HepG2 (cell line): ENCODE measurements at regions of chr7 and their contacts with region 1.

Region 1: GRCh38 chr7:47497367-47498096 is 84.4 kb downstream of the TNS3 start:
- DNase-seq: no peak
- ATAC-seq: no peak
- H3K4me3 ChIP-seq: no peak overlapping the region
- H3K27ac ChIP-seq: no peak overlapping the region
- H3K4me1 ChIP-seq: peaks cover 82% of the 10 kb centered on the region
- H3K27me3 ChIP-seq: no peaks in the 10 kb centered on the region
- CTCF ChIP-seq: no peak
- EP300 ChIP-seq: no peak
- POLR2A ChIP-seq: no peak
- RAD21 ChIP-seq: no peak

Region 2: DNA sequence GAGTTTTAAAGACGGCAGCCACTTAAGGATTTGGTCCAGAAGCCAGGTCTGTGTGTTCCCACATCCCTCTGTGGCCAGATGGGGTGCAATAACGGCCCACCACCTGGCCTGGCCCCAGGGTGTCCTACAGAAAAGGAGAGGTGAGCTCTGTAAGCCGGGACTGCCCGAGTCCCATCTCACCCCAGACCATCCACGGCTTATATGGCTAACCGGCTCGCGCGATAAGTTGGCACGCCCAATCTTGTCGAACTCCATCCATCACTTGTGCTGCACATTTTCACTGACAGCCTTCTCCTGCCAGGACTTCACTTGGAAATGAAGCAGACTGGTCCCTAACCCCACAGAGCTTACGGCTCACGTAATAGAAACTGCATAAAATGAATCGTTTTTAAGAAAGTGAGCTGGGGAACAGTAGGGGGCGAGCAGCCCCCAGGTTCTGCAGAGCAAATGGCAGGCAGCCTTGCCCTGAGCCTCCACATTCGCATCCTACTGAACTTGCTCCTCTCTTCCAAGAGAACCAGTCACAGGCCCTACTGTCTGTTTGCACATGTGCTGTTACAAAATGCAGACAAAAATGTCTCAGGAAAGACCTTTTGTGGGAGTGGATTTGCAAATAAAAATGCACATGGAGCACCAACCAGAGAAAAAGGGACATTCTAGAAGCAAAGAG is 13.8 kb before region 1 on chr7:
- CTCF ChIA-PET with region 1: no interaction called
- POLR2A ChIA-PET with region 1: no interaction called
- in situ Hi-C with region 1: no loop called
- intact Hi-C with region 1: no loop called
- DNase-seq: peak; percentile 36
- ATAC-seq: peak; percentile 46
- H3K4me3 ChIP-seq: no peak overlapping the region
- H3K27ac ChIP-seq: peak overlapping the region; percentile 26
- H3K4me1 ChIP-seq: peaks cover 82% of the 10 kb centered on the region
- H3K27me3 ChIP-seq: no peaks in the 10 kb centered on the region
- CTCF ChIP-seq: peak; percentile 51
- EP300 ChIP-seq: no peak
- POLR2A ChIP-seq: no peak
- RAD21 ChIP-seq: peak; percentile 32; the same call in 1 of the 2 replicates

Region 3: GRCh38 chr7:47513741-47514241 is 16.3 kb after region 1 on chr7:
- CTCF ChIA-PET with region 1: no interaction called
- POLR2A ChIA-PET with region 1: interaction called, 23 read pairs
- in situ Hi-C with region 1: no loop called
- intact Hi-C with region 1: no loop called
- DNase-seq: no peak
- ATAC-seq: peak; percentile 25; the same call in 1 of the 3 replicates
- H3K4me3 ChIP-seq: no peak overlapping the region
- H3K27ac ChIP-seq: peak overlapping the region; percentile 25
- H3K4me1 ChIP-seq: peaks cover 79% of the 10 kb centered on the region
- H3K27me3 ChIP-seq: no peaks in the 10 kb centered on the region
- CTCF ChIP-seq: no peak
- EP300 ChIP-seq: no peak
- POLR2A ChIP-seq: no peak
- RAD21 ChIP-seq: no peak

Region 4: DNA sequence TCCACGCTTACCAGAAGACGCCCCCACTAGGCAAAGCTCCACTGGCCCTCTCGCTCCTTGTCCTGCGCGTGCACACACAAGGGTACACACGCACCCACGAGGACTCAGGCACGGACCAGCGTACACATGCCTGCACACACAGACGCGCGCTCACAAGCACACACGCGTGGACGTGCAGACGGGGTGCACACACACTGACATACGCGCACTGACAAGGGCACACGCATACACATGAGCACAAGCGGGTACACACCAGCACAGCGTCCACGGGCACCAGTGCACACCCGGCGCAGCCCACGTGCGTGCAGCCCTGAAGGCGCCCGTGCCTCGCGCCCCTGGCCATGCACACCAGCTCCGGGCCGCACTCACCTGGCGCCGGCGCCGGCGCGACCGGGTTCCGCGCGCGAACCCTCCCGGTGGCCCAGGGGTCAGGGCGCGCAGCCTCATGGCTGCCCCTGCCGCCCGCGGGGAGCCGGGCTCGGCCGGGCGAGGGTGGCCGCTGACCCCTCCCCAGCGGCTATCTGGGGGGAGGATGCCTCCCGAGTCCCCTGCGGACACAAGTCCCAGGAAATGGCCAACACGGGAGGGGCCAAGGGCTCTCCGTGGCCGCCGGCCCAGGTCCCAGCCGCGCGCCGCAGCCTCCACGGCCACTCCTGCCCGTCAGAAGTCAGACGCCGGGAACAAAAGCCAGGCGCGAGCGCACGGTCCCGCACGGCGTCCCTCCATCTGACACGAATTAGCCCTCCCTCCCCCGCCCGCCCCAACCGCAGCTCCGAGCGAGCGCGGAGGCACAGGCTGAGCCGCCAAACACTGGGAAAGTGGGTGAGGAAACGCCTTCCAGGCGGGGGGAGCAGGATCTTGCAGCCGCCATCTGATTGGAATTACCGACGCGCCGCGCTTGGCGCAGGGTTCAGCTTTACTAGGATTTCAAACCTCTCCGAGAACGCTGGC is 39.4 kb after region 1 on chr7:
- CTCF ChIA-PET with region 1: no interaction called
- POLR2A ChIA-PET with region 1: interaction called, 7 read pairs
- in situ Hi-C with region 1: no loop called
- intact Hi-C with region 1: loop called (anchors 1 kb)
- DNase-seq: no peak
- ATAC-seq: no peak
- H3K4me3 ChIP-seq: peak overlapping the region; percentile 6 to 72 (median 41); a peak in 5 of 6 replicates
- H3K27ac ChIP-seq: peak overlapping the region; percentile 86
- H3K4me1 ChIP-seq: peaks cover 96% of the 10 kb centered on the region
- H3K27me3 ChIP-seq: no peaks in the 10 kb centered on the region; a peak in 1 of 5 replicates
- CTCF ChIP-seq: no peak
- EP300 ChIP-seq: no peak
- POLR2A ChIP-seq: no peak
- RAD21 ChIP-seq: no peak